ENCODE measurements at regions of chr11 and their contacts with region 1.

Region 1: GRCh38 chr11:133576351-133576750 is 44.0 kb upstream of the OPCML start:
- DNase-seq: peak in 2 of 4 experiments; percentile 12 to 23
- ATAC-seq: peak; percentile 73; the same call in 2 of the 3 replicates
- H3K4me3 ChIP-seq: no peak overlapping the region
- H3K27ac ChIP-seq: no peak overlapping the region
- H3K4me1 ChIP-seq: no peaks in the 10 kb centered on the region; a peak in 1 of 5 replicates
- H3K27me3 ChIP-seq: no peaks in the 10 kb centered on the region
- CTCF ChIP-seq: peak; percentile 3 to 43 (median 25); a peak in 2 of 6 replicates
- EP300 ChIP-seq: no peak
- POLR2A ChIP-seq: no peak
- RAD21 ChIP-seq: 0 out of 4 replicates have a peak, but pooled peaks of 1 of the 2 experiments have one; percentile 17

Region 2: GRCh38 chr11:133821776-133822175 is 245.4 kb after region 1 on chr11:
- CTCF ChIA-PET with region 1: no interaction called
- POLR2A ChIA-PET with region 1: no interaction called
- in situ Hi-C with region 1: no loop called
- intact Hi-C with region 1: loop called (anchors 10 kb)
- DNase-seq: peak; percentile 53 to 64 (median 55)
- ATAC-seq: peak; percentile 89
- H3K4me3 ChIP-seq: no peak overlapping the region
- H3K27ac ChIP-seq: no peak overlapping the region
- H3K4me1 ChIP-seq: no peaks in the 10 kb centered on the region
- H3K27me3 ChIP-seq: no peaks in the 10 kb centered on the region
- CTCF ChIP-seq: peak; percentile 54 to 63 (median 58)
- EP300 ChIP-seq: no peak
- POLR2A ChIP-seq: no peak
- RAD21 ChIP-seq: peak; percentile 28 to 57; a peak in 3 of 4 replicates

Measured in K562 (cell line).